ENCODE measurements at regions of chr17 and their contacts with region 1.

Region 1: DNA sequence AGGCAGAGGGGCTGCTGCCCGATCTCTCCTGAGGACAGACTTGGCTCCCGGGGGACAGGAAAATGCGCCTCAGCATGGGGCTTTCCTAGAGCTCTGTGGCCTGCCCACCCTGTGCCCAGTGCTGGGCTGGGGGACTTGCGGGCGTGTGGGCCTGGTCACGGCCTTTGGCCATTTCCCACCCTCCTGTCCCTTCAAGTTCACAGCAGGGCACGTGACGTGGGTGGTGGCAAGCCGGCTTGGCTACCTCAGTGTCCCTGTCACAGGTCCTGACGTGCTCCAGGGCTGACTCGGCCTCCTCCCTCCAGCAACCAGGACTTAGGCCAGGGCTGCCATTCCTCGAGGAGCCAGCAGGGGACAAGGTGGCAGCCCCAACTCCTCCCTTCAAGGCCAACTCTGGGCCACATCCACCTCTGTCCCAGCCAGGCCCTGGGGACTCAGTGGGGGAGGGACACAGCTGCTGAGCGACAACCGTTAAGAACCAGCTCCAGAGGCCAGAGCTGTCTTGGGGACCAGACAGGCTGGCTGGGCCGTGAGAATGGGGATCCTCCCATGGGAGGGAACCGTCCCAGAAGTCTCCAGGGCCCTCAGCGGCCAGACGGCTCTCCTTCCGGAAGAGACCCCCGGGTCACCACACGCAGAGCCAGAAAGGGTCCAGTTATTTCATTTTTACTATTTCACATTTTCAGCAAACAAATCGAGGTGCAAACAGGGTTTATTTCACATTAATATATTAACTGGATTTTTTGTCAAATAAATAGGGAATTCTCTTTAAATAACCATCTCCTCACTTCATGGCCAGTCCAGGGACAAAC is 1.1 kb upstream of the UNC13D start:
- DNase-seq: peak; percentile 76
- H3K4me3 Mint-ChIP-seq: peak overlapping the region; percentile 95
- H3K27ac Mint-ChIP-seq: peak overlapping the region; percentile 72
- H3K4me1 Mint-ChIP-seq: peaks cover 22% of the 10 kb centered on the region
- H3K27me3 Mint-ChIP-seq: no peaks in the 10 kb centered on the region

Region 2: GRCh38 chr17:75779231-75779986 is 65.8 kb before region 1 on chr17:
- CTCF ChIA-PET with region 1: interaction called, 6 read pairs
- intact Hi-C with region 1: loop called (anchors 1 kb)
- DNase-seq: peak; percentile 97
- H3K4me3 Mint-ChIP-seq: peak overlapping the region; percentile 91
- H3K27ac Mint-ChIP-seq: peak overlapping the region; percentile 99
- H3K4me1 Mint-ChIP-seq: peaks cover 54% of the 10 kb centered on the region
- H3K27me3 Mint-ChIP-seq: peaks cover 3% of the 10 kb centered on the region

Region 3: GRCh38 chr17:75855310-75856081 is 10.2 kb after region 1 on chr17 and contains the start of gene WBP2:
- CTCF ChIA-PET with region 1: interaction called, 32 read pairs
- intact Hi-C with region 1: loop called (anchors 1 kb)
- DNase-seq: peak; percentile 99
- H3K4me3 Mint-ChIP-seq: no peak within 1 kb of the TSS
- H3K27ac Mint-ChIP-seq: peak within 1 kb of the TSS; percentile 74
- H3K4me1 Mint-ChIP-seq: peaks cover 39% of the 10 kb centered on the region
- H3K27me3 Mint-ChIP-seq: no peaks in the 10 kb centered on the region
- total RNA-seq, gene WBP2: 65.0 to 68.7 TPM

Region 4: GRCh38 chr17:75872434-75873351 is 27.4 kb after region 1 on chr17:
- CTCF ChIA-PET with region 1: interaction called, 10 read pairs
- intact Hi-C with region 1: loop called (anchors 1 kb)
- DNase-seq: peak; percentile 36
- H3K4me3 Mint-ChIP-seq: no peak overlapping the region
- H3K27ac Mint-ChIP-seq: peak overlapping the region; percentile 36
- H3K4me1 Mint-ChIP-seq: peaks cover 29% of the 10 kb centered on the region
- H3K27me3 Mint-ChIP-seq: no peaks in the 10 kb centered on the region

Measured in activated naive CD4-positive, alpha-beta T cell treated with anti-CD3 and anti-CD28 coated beads for 36 hours (primary cell).